Aorta (tissue), 5 donors: ENCODE measurements at regions of chr14 and their contacts with region 1.

Region 1: DNA sequence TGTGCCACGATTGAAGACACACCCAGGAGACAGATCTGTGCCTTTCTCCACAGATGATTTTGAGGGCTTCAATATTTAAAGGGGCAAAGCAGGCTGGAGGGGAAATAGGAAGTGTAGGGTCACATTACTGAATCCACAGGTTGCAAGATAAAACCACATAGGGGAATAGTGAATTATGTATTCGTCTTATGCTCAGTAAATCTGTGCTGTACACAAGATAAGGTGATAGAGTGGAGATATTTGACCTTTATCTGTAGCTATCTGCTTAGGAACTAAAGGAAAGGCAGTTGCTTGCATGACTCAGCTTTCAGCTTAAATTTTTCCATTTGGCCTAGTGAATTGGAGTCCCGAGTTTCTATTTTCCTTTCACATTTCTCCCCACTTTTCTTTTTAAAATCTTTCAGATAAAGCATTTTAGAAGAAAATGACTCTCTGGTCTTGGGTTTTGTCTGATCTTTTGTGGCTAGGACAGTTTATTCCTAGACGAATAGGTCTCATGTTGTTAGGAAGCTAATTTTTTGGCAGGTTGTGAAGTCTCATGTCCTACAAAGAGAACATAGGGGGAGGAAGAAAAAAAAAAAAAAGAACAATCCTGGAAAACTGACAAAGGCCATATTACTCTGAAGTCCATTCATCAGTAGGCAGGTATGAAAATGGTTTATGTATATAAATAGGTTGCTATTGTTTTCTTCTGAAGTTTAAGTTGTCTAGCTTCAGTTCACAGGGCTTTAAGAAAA is 55.4 kb downstream of the FBXO33 start:
- DNase-seq: no peak
- ATAC-seq: peak; percentile 57
- H3K4me3 ChIP-seq: peak overlapping the region in 1 of 2 donors; percentile 26
- H3K27ac ChIP-seq: peak overlapping the region in 1 of 2 donors; percentile 87
- H3K4me1 ChIP-seq: peaks cover 0 to 2% of the 10 kb centered on the region in 2 donors
- H3K27me3 ChIP-seq: no peaks in the 10 kb centered on the region

Region 2: GRCh38 chr14:39310051-39310450 is 66.8 kb before region 1 on chr14:
- intact Hi-C with region 1: no loop called
- DNase-seq: no peak
- ATAC-seq: no peak
- H3K4me3 ChIP-seq: no peak overlapping the region
- H3K27ac ChIP-seq: no peak overlapping the region
- H3K4me1 ChIP-seq: no peaks in the 10 kb centered on the region
- H3K27me3 ChIP-seq: no peaks in the 10 kb centered on the region

Region 3: DNA sequence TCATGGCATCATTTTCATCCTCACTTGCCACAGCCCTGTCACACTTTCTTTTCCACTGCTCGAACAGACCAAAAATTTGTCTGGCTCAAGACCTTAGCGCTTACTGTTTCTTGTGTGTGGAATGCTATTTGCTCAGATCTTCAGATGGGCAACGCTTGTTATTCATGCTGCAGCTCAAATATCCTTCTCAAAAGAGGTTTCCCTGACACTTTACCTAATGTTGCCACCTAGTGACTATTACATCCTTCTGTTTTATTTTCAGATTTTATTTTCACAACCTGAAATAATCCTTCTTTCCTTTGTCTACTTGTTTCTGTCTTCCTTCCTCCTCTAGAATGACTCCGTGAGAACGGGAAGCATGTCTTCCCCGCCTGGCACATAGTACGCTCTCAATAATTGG is 49.8 kb after region 1 on chr14:
- intact Hi-C with region 1: loop called in 1 of 2 experiments (anchors 10 kb)
- DNase-seq: no peak
- ATAC-seq: no peak
- H3K4me3 ChIP-seq: no peak overlapping the region
- H3K27ac ChIP-seq: no peak overlapping the region
- H3K4me1 ChIP-seq: peaks cover 5 to 14% of the 10 kb centered on the region in 2 donors
- H3K27me3 ChIP-seq: no peaks in the 10 kb centered on the region